ENCODE measurements at regions of chr15 and their contacts with region 1.

Region 1: DNA sequence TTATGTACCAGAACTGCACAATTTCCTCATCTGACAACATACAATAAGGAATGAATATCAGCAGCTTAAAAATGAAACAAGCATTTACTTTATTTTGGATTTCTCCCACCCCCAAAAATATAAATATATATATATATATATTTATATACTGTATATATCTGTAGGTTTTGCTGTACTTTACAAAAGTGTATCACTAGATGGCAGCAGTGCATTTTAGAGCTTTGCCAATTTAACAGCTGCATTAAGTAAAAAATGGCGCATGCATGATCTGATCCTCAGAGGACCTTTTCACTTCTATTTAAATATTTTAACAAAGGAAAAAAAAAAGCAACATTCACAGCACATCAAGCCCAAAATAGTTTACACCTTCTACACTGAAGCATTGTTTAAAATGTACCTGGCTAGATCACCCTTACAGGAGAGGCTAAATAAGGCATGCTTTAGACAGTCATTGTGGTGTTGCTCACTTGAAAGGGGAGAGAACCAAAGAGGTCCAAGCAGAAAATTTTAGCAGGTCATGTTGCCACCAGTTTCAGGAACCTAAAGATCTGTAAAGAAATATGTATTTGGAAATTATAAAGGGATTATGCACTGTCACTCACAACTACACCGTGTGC is 72.6 kb downstream of the NPTN start:
- DNase-seq: peak; percentile 79
- ATAC-seq: peak; percentile 44; the same call in 1 of the 2 replicates
- H3K4me3 ChIP-seq: no peak overlapping the region
- H3K27ac ChIP-seq: no peak overlapping the region
- H3K4me1 ChIP-seq: peaks cover 28% of the 10 kb centered on the region
- H3K27me3 ChIP-seq: no peaks in the 10 kb centered on the region
- CTCF ChIP-seq: peak; percentile 54

Region 2: DNA sequence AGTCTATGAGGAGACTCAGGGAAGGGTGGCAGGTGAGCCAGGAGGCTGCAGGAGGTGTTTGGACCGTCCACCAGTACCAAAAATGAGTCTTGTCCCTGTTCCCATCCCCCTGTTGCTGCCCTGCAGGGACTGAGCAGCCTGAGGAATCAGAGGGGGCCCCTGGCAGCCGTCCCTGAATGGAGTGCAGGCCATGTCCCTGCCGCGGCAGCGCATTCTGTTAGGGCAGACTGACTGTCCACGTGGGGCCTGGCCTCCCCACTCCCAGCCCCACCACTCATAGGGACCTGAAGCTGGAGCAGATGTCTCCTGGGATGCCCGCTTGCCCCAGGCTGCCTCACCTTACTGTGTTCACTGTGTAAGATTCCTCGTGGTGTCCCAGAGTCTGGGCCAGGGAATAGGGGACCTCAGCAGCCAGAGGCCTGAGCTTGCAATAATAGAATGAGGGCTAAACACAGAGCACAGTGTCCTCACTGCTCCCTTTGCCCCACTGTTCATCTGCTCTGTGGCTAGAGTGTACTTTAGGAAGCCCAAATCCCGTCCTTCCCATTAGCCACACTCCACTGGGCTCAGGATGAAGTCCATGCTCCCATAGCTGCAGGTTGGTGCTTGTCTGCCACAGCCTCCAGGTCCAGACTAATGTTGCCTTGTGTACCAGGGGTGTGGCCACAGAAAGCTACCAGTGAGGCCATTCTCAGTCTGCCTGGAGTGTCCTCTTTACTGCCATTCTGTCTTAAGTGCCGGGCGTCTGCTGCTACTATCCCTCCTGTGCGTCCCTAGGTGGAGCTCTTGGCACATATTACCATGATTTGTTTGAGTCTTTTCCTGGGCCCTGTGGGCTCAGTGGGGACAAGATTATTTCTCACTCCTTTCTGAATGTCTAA is 255.0 kb before region 1 on chr15:
- CTCF ChIA-PET with region 1: no interaction called
- POLR2A ChIA-PET with region 1: no interaction called
- intact Hi-C with region 1: loop called (anchors 2 kb)
- DNase-seq: peak; percentile 74
- ATAC-seq: peak; percentile 93
- H3K4me3 ChIP-seq: no peak overlapping the region
- H3K27ac ChIP-seq: no peak overlapping the region
- H3K4me1 ChIP-seq: no peaks in the 10 kb centered on the region
- H3K27me3 ChIP-seq: no peaks in the 10 kb centered on the region
- CTCF ChIP-seq: peak; percentile 89

Region 3: DNA sequence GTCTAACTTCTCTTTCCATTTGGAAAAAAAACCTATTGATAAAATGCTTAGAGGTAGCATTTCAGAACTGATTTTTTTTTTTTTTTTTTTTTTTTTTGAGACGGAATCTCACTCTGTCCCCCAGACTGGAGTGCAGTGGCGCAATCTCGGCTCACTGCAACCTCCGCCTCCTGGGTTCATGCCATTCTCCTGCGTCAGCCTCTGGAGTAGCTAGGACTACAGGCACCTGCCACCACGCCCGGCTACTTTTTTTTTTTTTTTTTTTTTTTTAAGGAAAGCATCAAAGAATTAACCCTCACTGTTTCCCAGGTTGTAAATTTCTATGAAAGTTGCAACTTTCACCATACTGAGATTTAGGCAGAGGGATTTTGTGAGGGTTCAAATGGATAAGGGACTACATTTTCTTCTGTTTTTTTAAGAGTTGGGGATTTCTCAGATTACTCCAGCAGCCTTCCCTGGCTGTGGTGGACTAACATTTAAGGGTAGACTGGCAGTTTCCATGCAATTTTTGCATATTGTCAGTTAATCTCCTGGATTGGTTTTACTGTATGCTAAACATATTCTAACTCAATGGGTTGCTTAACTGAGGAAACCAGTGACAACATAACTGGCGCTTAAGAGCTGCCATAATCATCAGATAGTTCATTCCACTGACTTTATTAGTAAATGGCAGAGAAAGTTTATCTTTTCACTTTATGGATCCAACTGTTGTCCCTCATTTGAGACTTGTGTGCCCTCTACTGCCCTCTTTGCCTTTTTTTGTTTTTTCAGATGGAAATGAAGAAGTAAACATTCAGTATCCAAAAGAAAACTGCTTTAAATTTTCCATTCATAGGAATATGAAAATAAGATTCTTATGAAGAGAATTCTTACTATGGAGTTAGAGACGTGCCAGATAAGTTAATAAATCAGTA is 21.1 kb before region 1 on chr15:
- CTCF ChIA-PET with region 1: interaction called, 16 read pairs
- POLR2A ChIA-PET with region 1: no interaction called
- intact Hi-C with region 1: no loop called
- DNase-seq: no peak
- ATAC-seq: no peak
- H3K4me3 ChIP-seq: no peak overlapping the region
- H3K27ac ChIP-seq: no peak overlapping the region
- H3K4me1 ChIP-seq: peaks cover 14% of the 10 kb centered on the region
- H3K27me3 ChIP-seq: no peaks in the 10 kb centered on the region
- CTCF ChIP-seq: no peak

Region 4: GRCh38 chr15:73573572-73573971 is 13.0 kb after region 1 on chr15:
- CTCF ChIA-PET with region 1: no interaction called
- POLR2A ChIA-PET with region 1: no interaction called
- intact Hi-C with region 1: loop called (anchors 1 kb)
- DNase-seq: peak; percentile 41
- ATAC-seq: peak; percentile 73
- H3K4me3 ChIP-seq: no peak overlapping the region
- H3K27ac ChIP-seq: peak overlapping the region; percentile 22
- H3K4me1 ChIP-seq: no peaks in the 10 kb centered on the region
- H3K27me3 ChIP-seq: no peaks in the 10 kb centered on the region
- CTCF ChIP-seq: no peak

Region 5: GRCh38 chr15:73601451-73602445 is 41.1 kb after region 1 on chr15:
- CTCF ChIA-PET with region 1: no interaction called
- POLR2A ChIA-PET with region 1: no interaction called
- intact Hi-C with region 1: loop called (anchors 5 kb)
- DNase-seq: peak; percentile 58
- ATAC-seq: peak; percentile 89
- H3K4me3 ChIP-seq: no peak overlapping the region
- H3K27ac ChIP-seq: peak overlapping the region; percentile 42
- H3K4me1 ChIP-seq: peaks cover 36% of the 10 kb centered on the region
- H3K27me3 ChIP-seq: no peaks in the 10 kb centered on the region
- CTCF ChIP-seq: no peak

Region 6: DNA sequence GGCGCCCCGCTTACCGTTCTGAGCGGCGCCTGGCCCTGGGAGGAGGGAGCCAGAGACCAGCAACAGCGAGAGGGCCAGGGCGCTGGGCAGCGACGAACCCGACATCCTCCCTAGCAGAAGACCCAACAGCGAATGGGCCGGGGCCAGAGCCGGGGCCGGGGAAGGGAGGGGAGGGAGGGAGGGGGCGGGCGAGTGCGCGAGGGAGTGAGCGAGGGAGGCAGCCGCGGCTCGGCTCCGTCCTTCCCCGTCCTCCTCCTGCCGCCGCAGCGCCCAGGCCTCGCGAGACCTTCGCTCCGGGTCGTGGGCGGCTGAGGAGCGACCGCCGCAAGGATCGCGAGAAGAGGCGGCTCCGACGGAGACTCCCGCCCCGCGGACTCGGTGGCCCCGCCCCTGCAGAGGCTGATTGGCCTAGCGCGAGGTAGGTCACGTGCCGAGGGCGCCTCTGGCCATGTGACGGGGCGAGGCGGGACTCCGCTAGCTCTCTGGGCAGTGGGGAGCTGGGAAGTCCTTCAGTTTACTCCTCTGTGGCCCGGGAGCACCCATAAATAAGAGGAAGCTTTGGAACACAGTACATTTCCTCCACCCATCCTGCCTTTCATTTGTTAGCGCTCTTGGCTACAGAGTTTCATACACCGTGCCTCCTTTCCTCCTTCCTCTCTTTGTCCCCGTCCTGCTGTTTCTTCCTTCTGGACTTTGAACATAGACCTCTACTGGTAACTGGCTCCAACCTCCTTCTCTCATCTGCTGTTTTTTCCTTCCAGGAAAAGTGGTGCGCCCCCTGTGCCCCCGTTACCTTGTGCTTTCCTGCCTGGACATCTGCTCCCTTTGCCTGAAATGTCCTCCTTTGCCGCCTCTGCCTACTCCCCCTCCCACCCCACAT is 72.7 kb after region 1 on chr15 and contains the start of gene NPTN:
- CTCF ChIA-PET with region 1: interaction called, 26 read pairs
- POLR2A ChIA-PET with region 1: interaction called, 5 read pairs
- intact Hi-C with region 1: loop called (anchors 1 kb)
- DNase-seq: peak; percentile 97
- ATAC-seq: peak; percentile 78
- H3K4me3 ChIP-seq: peak within 1 kb of the TSS; percentile 90
- H3K27ac ChIP-seq: peak within 1 kb of the TSS; percentile 100
- H3K4me1 ChIP-seq: peaks cover 57% of the 10 kb centered on the region
- H3K27me3 ChIP-seq: no peaks in the 10 kb centered on the region
- CTCF ChIP-seq: no peak
- total RNA-seq, gene NPTN: 115 and 164 TPM in 2 replicates

Region 7: DNA sequence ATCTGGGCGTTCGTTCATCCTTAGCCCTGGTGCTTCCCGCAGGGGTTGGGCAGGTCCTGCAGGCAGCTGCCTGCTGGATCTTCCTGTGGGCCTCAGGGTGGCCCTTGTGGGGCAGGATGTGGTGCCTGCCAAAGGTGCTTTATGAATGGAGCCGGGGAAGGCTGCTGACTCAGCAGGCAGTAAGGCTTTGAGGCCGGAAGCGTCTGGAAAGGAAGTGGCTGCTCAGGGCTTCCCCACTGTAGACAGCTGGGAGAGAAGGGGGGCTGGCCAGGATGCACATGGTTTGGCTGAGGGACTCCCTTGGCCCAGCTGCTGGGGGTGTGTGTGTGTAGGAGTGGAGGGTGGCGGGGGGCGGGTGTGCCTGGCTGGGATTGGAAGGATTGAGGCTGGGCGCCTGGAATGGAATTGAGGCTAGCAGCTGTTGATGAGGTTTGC is 136.4 kb after region 1 on chr15:
- CTCF ChIA-PET with region 1: interaction called, 5 read pairs
- POLR2A ChIA-PET with region 1: no interaction called
- intact Hi-C with region 1: loop called (anchors 1 kb)
- DNase-seq: peak; percentile 96
- ATAC-seq: peak; percentile 94
- H3K4me3 ChIP-seq: no peak overlapping the region
- H3K27ac ChIP-seq: peak overlapping the region; percentile 84
- H3K4me1 ChIP-seq: peaks cover 23% of the 10 kb centered on the region
- H3K27me3 ChIP-seq: no peaks in the 10 kb centered on the region
- CTCF ChIP-seq: no peak

Measured in PC-3 (cell line).